Natural killer cell (primary cell): ENCODE measurements at regions of chr7 and their contacts with region 1.

Region 1: GRCh38 chr7:21253740-21254687 is 173.9 kb upstream of the SP4 start:
- DNase-seq: peak; percentile 16 to 59
- ATAC-seq: peak; percentile 74 to 83 (median 77)
- H3K4me3 ChIP-seq: no peak overlapping the region
- H3K4me3 Mint-ChIP-seq: no peak overlapping the region
- H3K27ac ChIP-seq: no peak overlapping the region
- H3K27ac Mint-ChIP-seq: no peak overlapping the region
- H3K4me1 ChIP-seq: no peaks in the 10 kb centered on the region
- H3K4me1 Mint-ChIP-seq: no peaks in the 10 kb centered on the region
- H3K27me3 ChIP-seq: peaks cover 39% of the 10 kb centered on the region
- H3K27me3 Mint-ChIP-seq: peaks cover 43 to 59% of the 10 kb centered on the region in 2 donors
- CTCF ChIP-seq: peak; percentile 37

Region 2: GRCh38 chr7:21013765-21014539 is 240.1 kb before region 1 on chr7:
- intact Hi-C with region 1: no loop called
- DNase-seq: no peak
- ATAC-seq: no peak
- H3K4me3 ChIP-seq: no peak overlapping the region
- H3K4me3 Mint-ChIP-seq: no peak overlapping the region
- H3K27ac ChIP-seq: no peak overlapping the region
- H3K27ac Mint-ChIP-seq: no peak overlapping the region
- H3K4me1 ChIP-seq: no peaks in the 10 kb centered on the region
- H3K4me1 Mint-ChIP-seq: no peaks in the 10 kb centered on the region
- H3K27me3 ChIP-seq: no peaks in the 10 kb centered on the region
- H3K27me3 Mint-ChIP-seq: no peaks in the 10 kb centered on the region
- CTCF ChIP-seq: no peak

Region 3: DNA sequence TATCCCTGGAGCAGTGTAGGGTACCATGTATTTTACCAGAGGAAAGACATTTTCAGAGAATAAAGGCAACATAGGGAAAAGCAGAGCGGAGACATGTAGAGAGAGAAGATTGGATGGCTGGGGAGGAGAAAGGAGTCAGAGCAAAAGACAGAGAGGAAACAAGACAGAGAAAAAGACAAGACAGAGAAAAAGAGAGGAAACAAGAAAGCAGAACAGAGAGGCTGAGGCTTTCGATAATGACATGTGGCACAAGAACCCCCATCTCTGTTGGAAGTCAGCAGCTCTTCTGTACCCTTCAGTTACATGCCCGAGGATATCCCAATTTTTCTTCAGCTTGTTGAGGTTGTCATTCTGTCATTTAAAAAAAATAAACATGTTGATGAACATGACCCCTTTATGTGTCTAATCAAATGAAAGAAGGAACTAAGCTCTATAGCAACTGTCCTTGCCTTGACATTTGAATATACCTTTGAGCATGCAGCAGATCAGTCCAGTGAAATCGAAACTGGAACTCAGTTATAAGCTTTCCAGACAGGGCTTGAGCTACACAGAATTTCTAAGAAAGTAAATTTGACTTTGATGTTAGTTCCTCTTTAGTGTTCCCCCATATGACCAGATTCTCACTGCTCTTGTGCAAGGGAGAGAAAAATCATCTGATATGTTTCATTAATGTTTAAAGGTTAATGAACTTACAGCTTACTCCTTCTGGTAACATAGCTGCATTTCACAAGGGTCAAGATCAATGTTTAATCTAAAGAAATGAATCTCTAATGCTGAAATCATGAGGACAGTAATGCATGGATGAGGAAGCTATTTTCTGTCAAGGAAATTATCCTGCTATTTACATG is 98.8 kb after region 1 on chr7:
- intact Hi-C with region 1: no loop called
- DNase-seq: peak in 1 of 2 donors; percentile 69
- ATAC-seq: peak; percentile 68 to 82 (median 69)
- H3K4me3 ChIP-seq: no peak overlapping the region
- H3K4me3 Mint-ChIP-seq: peak overlapping the region; percentile 84
- H3K27ac ChIP-seq: peak overlapping the region; percentile 73
- H3K27ac Mint-ChIP-seq: peak overlapping the region; percentile 82 to 88
- H3K4me1 ChIP-seq: peaks cover 35% of the 10 kb centered on the region
- H3K4me1 Mint-ChIP-seq: peaks cover 52 to 59% of the 10 kb centered on the region in 2 donors
- H3K27me3 ChIP-seq: no peaks in the 10 kb centered on the region
- H3K27me3 Mint-ChIP-seq: no peaks in the 10 kb centered on the region
- CTCF ChIP-seq: no peak

Region 4: DNA sequence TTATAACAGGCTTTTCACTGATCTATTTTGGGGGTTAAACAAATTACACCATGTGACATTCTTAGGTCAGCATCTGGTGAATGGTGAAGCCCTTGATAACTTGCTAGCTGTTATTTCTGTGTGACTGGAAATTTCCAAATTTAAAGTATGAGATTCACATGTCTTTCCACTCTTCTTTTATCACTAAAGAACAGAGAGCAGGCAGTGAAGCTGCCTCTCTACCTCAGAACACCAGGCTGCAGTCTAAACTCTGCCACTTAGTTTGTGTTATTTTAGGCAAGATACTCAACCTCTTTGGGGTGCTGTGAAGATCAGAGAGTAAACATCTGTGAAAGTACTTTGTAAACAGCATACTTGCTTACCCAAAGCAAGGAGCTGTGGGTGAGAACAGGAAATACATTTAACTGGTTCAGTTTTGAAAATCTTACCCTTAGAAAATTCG is 158.4 kb after region 1 on chr7:
- intact Hi-C with region 1: loop called (anchors 10 kb)
- DNase-seq: peak in 1 of 2 donors; percentile 49
- ATAC-seq: peak; percentile 81 to 92 (median 88)
- H3K4me3 ChIP-seq: no peak overlapping the region
- H3K4me3 Mint-ChIP-seq: peak overlapping the region; percentile 83
- H3K27ac ChIP-seq: peak overlapping the region; percentile 71
- H3K27ac Mint-ChIP-seq: peak overlapping the region; percentile 92 to 94
- H3K4me1 ChIP-seq: peaks cover 27% of the 10 kb centered on the region
- H3K4me1 Mint-ChIP-seq: peaks cover 27 to 56% of the 10 kb centered on the region in 2 donors
- H3K27me3 ChIP-seq: no peaks in the 10 kb centered on the region
- H3K27me3 Mint-ChIP-seq: no peaks in the 10 kb centered on the region
- CTCF ChIP-seq: no peak

Region 5: DNA sequence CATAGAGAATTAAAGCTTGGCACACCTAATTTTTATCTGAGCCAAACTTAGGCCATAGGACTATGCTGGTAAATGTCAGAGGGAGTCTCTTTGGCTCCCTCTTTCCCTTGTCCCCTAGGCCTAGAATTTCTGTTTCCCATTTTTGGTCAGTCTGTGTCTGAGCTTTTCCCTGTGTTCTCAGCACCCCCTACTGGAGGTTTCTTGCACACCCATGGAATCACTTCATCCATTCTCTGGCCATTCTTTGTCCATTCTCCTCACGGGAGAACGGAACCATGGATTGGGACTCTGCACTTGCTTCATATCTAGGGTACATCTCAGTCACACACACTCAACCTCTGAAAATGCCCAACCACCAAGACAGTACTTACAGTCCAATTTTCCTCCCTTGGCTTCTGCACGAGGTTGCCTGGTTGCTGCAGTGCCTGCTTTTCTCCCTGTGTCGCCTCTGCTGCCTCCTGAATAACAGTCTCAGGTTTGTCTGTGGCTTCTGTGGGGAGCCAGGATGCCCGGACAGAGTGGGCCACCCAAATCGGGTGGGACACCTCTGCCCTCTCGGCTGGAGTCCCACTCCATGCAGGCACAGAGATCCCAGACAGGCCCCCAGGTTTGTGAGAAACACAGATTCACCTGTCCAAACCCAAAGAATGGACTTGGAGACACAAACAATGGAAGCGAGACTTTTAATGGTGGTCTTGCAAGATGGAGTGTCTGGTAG is 253.8 kb after region 1 on chr7:
- intact Hi-C with region 1: loop called (anchors 1 kb)
- DNase-seq: peak; percentile 17 to 59
- ATAC-seq: peak in 2 of 3 donors; percentile 30 to 57
- H3K4me3 ChIP-seq: no peak overlapping the region
- H3K4me3 Mint-ChIP-seq: no peak overlapping the region
- H3K27ac ChIP-seq: no peak overlapping the region
- H3K27ac Mint-ChIP-seq: no peak overlapping the region
- H3K4me1 ChIP-seq: no peaks in the 10 kb centered on the region
- H3K4me1 Mint-ChIP-seq: peaks cover 21 to 28% of the 10 kb centered on the region in 2 donors
- H3K27me3 ChIP-seq: no peaks in the 10 kb centered on the region
- H3K27me3 Mint-ChIP-seq: no peaks in the 10 kb centered on the region
- CTCF ChIP-seq: peak; percentile 61

Region 6: DNA sequence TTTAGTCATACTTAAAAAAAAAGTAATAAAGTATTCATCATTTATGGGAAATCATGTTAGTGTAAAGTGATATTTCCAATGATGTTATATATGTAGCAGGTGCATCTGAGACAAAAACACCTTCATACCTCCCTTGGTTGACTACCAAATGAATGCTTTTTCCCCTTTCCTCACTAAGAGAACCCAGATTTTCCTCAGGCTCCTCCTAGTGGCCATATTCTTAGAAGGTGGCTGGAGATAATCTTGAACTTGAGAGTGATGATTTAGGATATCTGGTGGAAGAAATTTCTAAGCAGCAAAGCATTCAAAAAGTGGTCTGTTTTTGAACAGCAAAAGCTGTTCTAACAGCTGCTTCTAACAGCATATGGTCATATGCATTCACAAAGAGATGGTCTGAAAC is 272.0 kb after region 1 on chr7:
- intact Hi-C with region 1: loop called (anchors 1 kb)
- DNase-seq: peak in 1 of 2 donors; percentile 47
- ATAC-seq: no peak
- H3K4me3 ChIP-seq: no peak overlapping the region
- H3K4me3 Mint-ChIP-seq: no peak overlapping the region
- H3K27ac ChIP-seq: no peak overlapping the region
- H3K27ac Mint-ChIP-seq: no peak overlapping the region
- H3K4me1 ChIP-seq: no peaks in the 10 kb centered on the region
- H3K4me1 Mint-ChIP-seq: no peaks in the 10 kb centered on the region
- H3K27me3 ChIP-seq: no peaks in the 10 kb centered on the region
- H3K27me3 Mint-ChIP-seq: peaks cover 0 to 3% of the 10 kb centered on the region in 2 donors
- CTCF ChIP-seq: peak; percentile 58

Region 7: DNA sequence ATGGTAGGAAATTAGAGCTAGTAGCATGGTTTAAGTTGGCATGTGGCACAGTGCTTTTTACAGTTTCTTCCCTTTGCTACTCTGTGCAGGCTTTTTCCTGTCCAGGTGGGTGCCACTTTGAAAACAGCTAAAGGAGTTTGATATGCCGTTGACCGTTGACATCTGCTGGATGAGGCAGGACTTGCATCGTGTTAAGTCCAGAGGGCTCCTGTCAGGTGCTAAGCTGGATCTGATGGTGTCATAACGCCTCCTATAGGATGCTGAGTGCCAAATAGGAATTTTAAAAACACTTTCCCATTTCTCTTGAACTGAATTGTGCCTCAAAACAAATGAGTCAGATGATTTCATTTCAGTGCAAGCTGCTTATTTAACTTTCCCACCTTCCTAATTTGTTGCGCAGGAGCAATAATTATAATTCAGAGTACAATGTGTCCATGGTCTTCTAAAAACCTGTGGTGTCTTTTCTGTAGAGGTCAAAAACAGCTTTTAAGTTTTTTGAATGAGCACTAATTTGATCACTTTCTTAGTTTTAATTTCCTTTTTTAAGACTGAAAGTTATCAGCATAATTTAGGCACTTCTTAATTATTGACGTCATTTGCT is 513.4 kb after region 1 on chr7:
- intact Hi-C with region 1: loop called (anchors 10 kb)
- DNase-seq: peak in 1 of 2 donors; percentile 30
- ATAC-seq: peak in 1 of 3 donors; percentile 59
- H3K4me3 ChIP-seq: no peak overlapping the region
- H3K4me3 Mint-ChIP-seq: no peak overlapping the region
- H3K27ac ChIP-seq: no peak overlapping the region
- H3K27ac Mint-ChIP-seq: no peak overlapping the region
- H3K4me1 ChIP-seq: no peaks in the 10 kb centered on the region
- H3K4me1 Mint-ChIP-seq: peaks cover 0 to 5% of the 10 kb centered on the region in 2 donors
- H3K27me3 ChIP-seq: no peaks in the 10 kb centered on the region
- H3K27me3 Mint-ChIP-seq: peaks cover 4 to 32% of the 10 kb centered on the region in 2 donors
- CTCF ChIP-seq: no peak

Region 8: DNA sequence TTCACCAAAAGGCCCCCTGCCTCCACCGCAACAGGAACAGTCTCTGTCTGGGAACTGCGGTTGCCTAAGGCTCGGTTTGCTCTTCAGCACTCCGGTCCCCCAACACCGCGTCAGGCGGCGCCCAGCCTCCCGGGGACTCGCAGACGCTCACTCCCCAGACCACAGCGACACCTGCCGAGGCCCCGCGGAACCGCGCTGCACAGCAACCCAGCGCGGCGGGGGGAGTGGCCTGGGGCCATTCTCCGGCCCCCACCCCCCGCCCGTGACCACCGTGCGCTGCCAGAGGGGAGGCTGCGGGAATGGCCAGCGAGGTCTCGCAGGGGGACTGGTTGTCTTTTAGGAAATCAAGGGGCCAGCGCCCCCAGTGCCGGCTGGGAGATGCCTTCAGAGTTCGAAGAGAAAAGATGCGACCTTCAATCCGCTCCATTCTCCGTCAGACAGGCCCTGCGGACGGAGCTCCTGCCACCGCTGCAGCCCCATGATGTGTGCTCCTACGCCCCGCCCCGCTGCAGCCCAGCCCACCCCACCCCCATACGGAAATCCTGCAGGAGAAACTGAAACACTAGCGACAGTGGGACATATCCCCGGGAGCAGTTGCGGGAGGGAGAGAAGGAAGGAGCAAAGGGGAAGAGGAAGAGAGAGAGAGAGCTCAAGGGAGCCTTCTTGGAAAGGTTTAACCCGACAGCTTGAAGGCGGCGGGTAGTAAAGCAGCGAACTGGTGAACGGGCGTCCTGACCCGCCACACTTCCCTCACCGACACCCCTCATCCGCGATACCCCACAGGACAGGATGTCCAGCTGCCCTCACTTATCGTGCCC is 829.1 kb after region 1 on chr7:
- intact Hi-C with region 1: loop called (anchors 5 kb)
- DNase-seq: peak; percentile 84 to 86
- ATAC-seq: peak; percentile 97 to 98 (median 98)
- H3K4me3 ChIP-seq: peak overlapping the region; percentile 72
- H3K4me3 Mint-ChIP-seq: peak overlapping the region; percentile 90
- H3K27ac ChIP-seq: peak overlapping the region; percentile 76
- H3K27ac Mint-ChIP-seq: peak overlapping the region; percentile 41 to 82
- H3K4me1 ChIP-seq: peaks cover 7% of the 10 kb centered on the region
- H3K4me1 Mint-ChIP-seq: peaks cover 8 to 24% of the 10 kb centered on the region in 2 donors
- H3K27me3 ChIP-seq: peaks cover 4% of the 10 kb centered on the region
- H3K27me3 Mint-ChIP-seq: peaks cover 15 to 30% of the 10 kb centered on the region in 2 donors
- CTCF ChIP-seq: peak; percentile 97